ENCODE measurements at regions of chr14 and their contacts with region 1.

Region 1: DNA sequence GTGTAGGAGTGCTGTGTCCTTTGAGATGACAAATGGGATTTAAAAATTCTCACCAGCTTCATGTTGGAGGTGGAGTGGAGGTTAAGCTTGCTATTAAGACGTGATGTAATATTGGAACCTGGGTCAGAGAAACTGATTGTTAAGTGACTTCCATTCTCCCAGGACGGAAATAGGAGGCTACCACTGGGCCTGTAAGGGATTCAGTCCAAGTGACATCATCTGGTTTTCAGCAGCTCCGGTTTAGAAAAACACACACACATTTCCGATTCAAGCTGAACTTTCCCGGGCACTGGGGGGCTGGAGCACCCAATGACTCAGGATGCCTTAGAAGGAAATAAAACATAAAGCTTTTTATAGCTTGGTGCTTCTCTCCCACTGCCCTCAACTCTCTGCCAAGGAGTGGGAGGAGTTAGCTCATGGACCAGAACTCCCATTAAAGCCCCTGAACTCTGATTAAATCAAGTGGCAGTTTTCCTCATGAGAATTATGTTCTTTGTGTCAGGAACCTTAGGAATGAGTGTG is 12.4 kb downstream of the CALM1 start:
- DNase-seq: peak; percentile 28
- H3K4me3 ChIP-seq: no peak overlapping the region
- H3K27ac ChIP-seq: peak overlapping the region; percentile 49 to 59
- H3K4me1 ChIP-seq: no peaks in the 10 kb centered on the region
- H3K27me3 ChIP-seq: no peaks in the 10 kb centered on the region
- CTCF ChIP-seq: no peak
- POLR2A ChIP-seq: no peak

Region 2: GRCh38 chr14:90454041-90455000 is 45.1 kb after region 1 on chr14:
- intact Hi-C with region 1: loop called (anchors 2 kb)
- DNase-seq: no peak
- H3K4me3 ChIP-seq: no peak overlapping the region
- H3K27ac ChIP-seq: no peak overlapping the region
- H3K4me1 ChIP-seq: no peaks in the 10 kb centered on the region
- H3K27me3 ChIP-seq: no peaks in the 10 kb centered on the region
- CTCF ChIP-seq: no peak
- POLR2A ChIP-seq: no peak